CD4-positive, alpha-beta T cell (primary cell): ENCODE measurements at regions of chr2 and their contacts with region 1.

Region 1: GRCh38 chr2:96638144-96639121 is at the start of gene KANSL3:
- DNase-seq: peak; percentile 79 to 95 (median 84)
- ATAC-seq: peak; percentile 85
- H3K4me3 ChIP-seq: peak within 1 kb of the TSS; percentile 98
- H3K4me3 Mint-ChIP-seq: peak within 1 kb of the TSS; percentile 99
- H3K27ac ChIP-seq: peak within 1 kb of the TSS; percentile 69 to 75
- H3K27ac Mint-ChIP-seq: peak within 1 kb of the TSS; percentile 96
- H3K4me1 ChIP-seq: peaks cover 29% of the 10 kb centered on the region
- H3K4me1 Mint-ChIP-seq: peaks cover 45% of the 10 kb centered on the region
- H3K27me3 ChIP-seq: no peaks in the 10 kb centered on the region
- H3K27me3 Mint-ChIP-seq: no peaks in the 10 kb centered on the region
- CTCF ChIP-seq: no peak
- total RNA-seq, gene KANSL3: 54.4 to 61.8 TPM

Region 2: GRCh38 chr2:96625571-96626552 is 12.6 kb before region 1 on chr2:
- CTCF ChIA-PET with region 1: interaction called, 3 read pairs
- POLR2A ChIA-PET with region 1: interaction called, 19 read pairs
- intact Hi-C with region 1: no loop called
- DNase-seq: no peak
- ATAC-seq: no peak
- H3K4me3 ChIP-seq: no peak overlapping the region
- H3K4me3 Mint-ChIP-seq: no peak overlapping the region
- H3K27ac ChIP-seq: no peak overlapping the region
- H3K27ac Mint-ChIP-seq: peak overlapping the region; percentile 36
- H3K4me1 ChIP-seq: no peaks in the 10 kb centered on the region
- H3K4me1 Mint-ChIP-seq: peaks cover 17% of the 10 kb centered on the region
- H3K27me3 ChIP-seq: no peaks in the 10 kb centered on the region
- H3K27me3 Mint-ChIP-seq: no peaks in the 10 kb centered on the region
- CTCF ChIP-seq: no peak

Region 3: DNA sequence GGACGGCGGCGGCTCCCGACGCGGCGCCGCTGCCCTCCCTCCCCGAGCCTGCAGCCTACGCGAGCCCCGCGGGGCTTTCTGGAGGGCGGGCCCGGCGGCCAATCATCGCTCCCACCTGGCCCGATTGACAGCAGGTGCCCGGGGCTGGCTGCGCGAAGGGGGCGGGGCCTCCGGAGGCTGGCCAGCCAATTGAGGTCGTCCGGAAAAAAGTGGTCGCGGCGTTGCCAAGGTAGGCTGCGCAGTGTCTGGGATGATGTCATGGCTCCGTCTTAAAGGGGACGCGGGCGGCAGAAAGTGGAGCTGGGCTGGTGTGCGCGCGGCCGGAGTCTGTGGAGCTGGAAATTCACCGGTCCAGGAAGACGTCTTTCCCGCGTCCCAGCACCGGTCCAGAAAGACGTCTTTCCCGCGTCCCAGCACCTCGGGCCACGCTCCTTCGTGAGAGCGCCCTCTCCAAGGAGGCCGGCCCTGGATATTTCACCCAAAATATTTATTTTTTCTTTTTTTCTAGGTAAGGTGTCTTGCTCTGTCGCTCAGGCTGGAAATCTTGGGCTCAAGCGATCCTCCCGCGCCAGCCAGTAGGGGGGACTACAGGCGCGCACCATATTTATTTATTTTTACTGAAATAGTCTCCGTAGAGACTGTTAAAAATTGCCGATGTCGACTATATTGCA is 1025.7 kb after region 1 on chr2 and contains the start of gene ACTR1B:
- CTCF ChIA-PET with region 1: no interaction called
- POLR2A ChIA-PET with region 1: no interaction called
- intact Hi-C with region 1: loop called in 1 of 2 experiments (anchors 10 kb)
- DNase-seq: peak; percentile 94 to 99 (median 96)
- ATAC-seq: peak; percentile 86
- H3K4me3 ChIP-seq: peak within 1 kb of the TSS; percentile 96
- H3K4me3 Mint-ChIP-seq: peak within 1 kb of the TSS; percentile 100
- H3K27ac ChIP-seq: peak within 1 kb of the TSS; percentile 93 to 98
- H3K27ac Mint-ChIP-seq: peak within 1 kb of the TSS; percentile 99
- H3K4me1 ChIP-seq: peaks cover 34% of the 10 kb centered on the region
- H3K4me1 Mint-ChIP-seq: peaks cover 31% of the 10 kb centered on the region
- H3K27me3 ChIP-seq: no peaks in the 10 kb centered on the region
- H3K27me3 Mint-ChIP-seq: no peaks in the 10 kb centered on the region
- CTCF ChIP-seq: peak; percentile 66
- total RNA-seq, gene ACTR1B: 89.5 to 92.8 TPM